CD4-positive, alpha-beta memory T cell (primary cell): ENCODE measurements at regions of chr22 and their contacts with region 1.

Region 1: DNA sequence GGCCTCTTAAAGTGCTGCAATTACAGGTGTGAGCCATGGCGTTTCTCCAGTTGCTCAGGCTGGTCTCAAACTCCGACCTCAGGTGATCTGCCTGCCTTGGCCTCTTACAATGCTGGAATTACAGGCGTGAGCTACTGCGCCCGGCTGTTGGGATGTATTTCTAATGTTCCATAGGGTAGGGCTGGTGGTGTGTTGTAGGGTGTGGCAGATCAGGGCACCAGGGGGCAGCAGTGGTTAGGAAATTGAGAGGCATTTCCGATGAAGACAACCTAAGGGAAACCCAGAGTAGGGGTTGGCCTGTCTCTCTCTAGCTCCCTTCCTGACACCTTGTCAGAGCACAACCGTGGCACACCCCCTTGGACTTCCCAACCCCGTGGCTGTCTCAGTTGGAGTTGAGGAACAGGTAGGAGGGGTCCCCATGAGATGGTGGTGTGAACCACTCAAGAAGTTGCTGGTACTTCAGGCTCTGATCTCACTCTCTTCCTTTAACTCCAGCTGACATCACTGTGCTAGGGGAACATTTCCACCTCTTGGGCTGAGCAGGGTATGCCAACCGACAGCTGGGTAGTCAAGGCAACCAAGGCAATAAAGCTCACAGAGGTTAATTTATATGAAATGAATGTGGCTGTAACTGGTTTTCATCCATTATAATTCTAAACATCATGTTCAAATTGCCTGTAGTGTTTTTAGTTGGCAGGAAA is 33.0 kb downstream of the YWHAH start:
- DNase-seq: peak; percentile 67 to 73 (median 70)
- H3K4me3 ChIP-seq: no peak overlapping the region
- H3K4me3 Mint-ChIP-seq: no peak overlapping the region
- H3K27ac ChIP-seq: no peak overlapping the region
- H3K27ac Mint-ChIP-seq: peak overlapping the region in 1 of 7 donors; percentile 69
- H3K4me1 ChIP-seq: no peaks in the 10 kb centered on the region
- H3K4me1 Mint-ChIP-seq: peaks cover 0 to 4% (median 1%) of the 10 kb centered on the region in 4 donors
- H3K27me3 ChIP-seq: no peaks in the 10 kb centered on the region
- H3K27me3 Mint-ChIP-seq: no peaks in the 10 kb centered on the region

Region 2: GRCh38 chr22:32080904-32081303 is 103.6 kb after region 1 on chr22:
- CTCF ChIA-PET with region 1: interaction called, 34 read pairs
- POLR2A ChIA-PET with region 1: no interaction called
- intact Hi-C with region 1: no loop called
- DNase-seq: peak in 4 of 5 donors; percentile 29 to 46 (median 33)
- H3K4me3 ChIP-seq: no peak overlapping the region
- H3K4me3 Mint-ChIP-seq: no peak overlapping the region
- H3K27ac ChIP-seq: no peak overlapping the region
- H3K27ac Mint-ChIP-seq: no peak overlapping the region
- H3K4me1 ChIP-seq: no peaks in the 10 kb centered on the region
- H3K4me1 Mint-ChIP-seq: no peaks in the 10 kb centered on the region
- H3K27me3 ChIP-seq: no peaks in the 10 kb centered on the region
- H3K27me3 Mint-ChIP-seq: peaks cover 5 to 8% of the 10 kb centered on the region in 2 donors